Left colon (tissue), 2 donors: ENCODE measurements at regions of chr1 and their contacts with region 1.

Region 1: GRCh38 chr1:212455803-212456528 is 23.2 kb downstream of the NENF start:
- DNase-seq: peak; percentile 63 to 86
- ATAC-seq: peak; percentile 84

Region 2: DNA sequence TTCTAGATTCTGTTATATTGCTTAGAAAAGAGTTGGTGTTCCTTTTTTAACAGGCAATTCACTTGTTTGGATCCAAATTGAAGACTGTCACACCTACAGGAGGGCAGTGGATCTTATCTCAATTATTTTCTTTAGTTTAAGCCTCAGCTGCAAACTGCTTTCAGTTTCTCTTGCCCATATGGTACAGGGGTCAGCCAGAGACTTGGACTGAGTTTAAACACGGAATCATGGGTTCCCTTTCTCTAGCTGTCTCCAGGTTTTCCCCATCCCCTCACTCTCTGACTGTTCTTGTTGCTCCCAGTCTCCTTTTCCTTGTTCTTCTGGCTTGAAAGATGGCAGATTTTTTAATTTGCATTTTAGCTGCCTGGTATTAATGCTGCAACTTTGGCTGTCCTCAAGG is 402.0 kb before region 1 on chr1:
- intact Hi-C with region 1: loop called in 1 of 2 experiments (anchors 10 kb)
- DNase-seq: no peak
- ATAC-seq: no peak

Region 3: DNA sequence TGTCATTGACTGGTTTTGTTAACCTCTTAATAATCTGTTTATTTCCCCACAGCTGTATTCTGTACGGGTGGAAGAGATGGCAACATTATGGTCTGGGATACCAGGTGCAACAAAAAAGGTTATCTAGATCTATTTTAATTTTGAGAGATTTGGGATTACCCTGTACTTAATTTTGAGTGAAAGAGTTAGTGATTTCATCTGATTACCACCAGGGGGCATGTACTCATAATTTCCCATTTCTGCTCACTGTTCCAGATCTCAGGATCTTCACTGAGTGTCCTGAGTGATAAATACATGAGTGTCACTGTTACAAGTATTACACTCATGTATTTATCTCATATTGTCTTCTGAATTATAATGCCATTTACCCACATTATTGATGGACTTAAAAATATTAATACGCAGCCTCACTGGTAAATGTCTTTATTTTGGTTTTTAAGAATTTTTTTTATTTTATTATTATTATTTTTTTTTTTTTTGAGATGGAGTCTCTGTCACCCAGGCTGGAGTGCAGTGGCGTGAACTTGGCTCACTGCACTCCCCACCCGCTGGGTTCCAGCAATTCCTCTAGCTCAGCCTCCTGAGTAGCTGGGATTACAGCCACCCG is 393.0 kb before region 1 on chr1:
- intact Hi-C with region 1: loop called (anchors 5 to 10 kb)
- DNase-seq: no peak
- ATAC-seq: peak; percentile 61

Region 4: DNA sequence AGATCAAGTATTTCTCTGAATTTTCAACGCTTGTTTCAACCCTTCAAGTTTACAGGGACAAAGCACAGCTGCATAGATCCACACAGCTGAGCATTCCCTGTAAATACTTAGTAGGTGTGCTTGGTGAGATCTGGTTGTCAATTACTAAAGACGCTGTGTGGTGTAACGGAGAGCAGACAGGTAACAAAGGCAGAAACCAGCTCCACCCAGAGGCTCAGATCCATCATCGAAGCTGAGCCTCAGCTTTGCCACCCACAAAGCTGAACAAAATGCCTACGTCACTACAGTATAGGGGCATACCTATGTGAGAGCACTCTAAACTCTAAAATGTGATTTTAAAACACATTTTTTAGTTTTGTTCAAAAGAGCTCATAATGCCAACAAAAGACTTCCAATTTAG is 80.0 kb before region 1 on chr1:
- intact Hi-C with region 1: loop called in 1 of 2 experiments (anchors 10 kb)
- DNase-seq: no peak
- ATAC-seq: no peak

Region 5: DNA sequence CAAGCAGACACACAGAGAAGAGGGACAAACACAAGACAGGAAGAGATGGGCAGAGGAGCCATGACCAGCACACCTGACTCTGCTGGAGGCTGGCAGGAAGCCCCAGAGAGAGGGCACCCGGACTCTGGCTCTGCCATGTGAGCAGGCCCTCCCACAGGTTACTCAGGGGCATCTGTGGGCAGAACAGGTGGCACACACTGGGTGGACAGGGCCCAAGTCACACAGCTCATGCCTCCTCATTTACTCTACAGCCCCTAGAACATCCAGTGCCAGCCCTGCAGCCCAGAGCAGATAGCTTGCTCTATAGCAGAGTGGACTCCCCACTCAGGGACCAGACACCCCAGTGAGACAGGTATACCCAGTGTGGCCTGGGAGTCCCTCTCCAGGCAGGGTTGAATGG is 69.9 kb before region 1 on chr1:
- intact Hi-C with region 1: no loop called
- DNase-seq: no peak
- ATAC-seq: no peak

Region 6: GRCh38 chr1:212819726-212820125 is 363.8 kb after region 1 on chr1:
- intact Hi-C with region 1: no loop called
- DNase-seq: no peak
- ATAC-seq: no peak